PC-3 (cell line): ENCODE measurements at regions of chr21 and their contacts with region 1.

Region 1: GRCh38 chr21:39518138-39518846 is 66.5 kb downstream of the SH3BGR start:
- DNase-seq: peak; percentile 82
- ATAC-seq: peak; percentile 97
- H3K4me3 ChIP-seq: no peak overlapping the region
- H3K27ac ChIP-seq: no peak overlapping the region
- H3K4me1 ChIP-seq: peaks cover 5% of the 10 kb centered on the region; the same call in 1 of the 2 replicates
- H3K27me3 ChIP-seq: no peaks in the 10 kb centered on the region
- CTCF ChIP-seq: peak; percentile 96

Region 2: DNA sequence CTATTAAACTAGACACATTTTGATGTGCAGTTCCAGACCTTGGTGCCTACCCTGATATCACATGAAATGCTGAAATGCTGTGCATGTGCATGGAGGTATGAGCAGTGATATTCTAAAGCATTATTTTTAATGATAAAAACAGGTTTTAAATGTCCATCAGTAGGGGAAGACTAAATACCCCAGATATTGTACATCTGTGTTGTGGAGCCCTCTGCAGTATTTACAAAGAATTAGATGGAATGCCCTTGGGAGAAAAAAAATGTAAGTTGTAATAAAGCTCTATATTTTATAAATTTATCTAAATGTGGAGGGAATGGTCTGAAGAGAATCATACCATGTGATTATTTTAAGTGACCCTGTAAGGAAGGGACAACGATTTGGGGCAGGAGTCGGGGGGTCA is 187.6 kb after region 1 on chr21:
- CTCF ChIA-PET with region 1: no interaction called
- POLR2A ChIA-PET with region 1: no interaction called
- intact Hi-C with region 1: loop called (anchors 2 kb)
- DNase-seq: peak; percentile 44
- ATAC-seq: peak; percentile 45
- H3K4me3 ChIP-seq: no peak overlapping the region
- H3K27ac ChIP-seq: no peak overlapping the region
- H3K4me1 ChIP-seq: no peaks in the 10 kb centered on the region
- H3K27me3 ChIP-seq: no peaks in the 10 kb centered on the region
- CTCF ChIP-seq: peak; percentile 60

Region 3: DNA sequence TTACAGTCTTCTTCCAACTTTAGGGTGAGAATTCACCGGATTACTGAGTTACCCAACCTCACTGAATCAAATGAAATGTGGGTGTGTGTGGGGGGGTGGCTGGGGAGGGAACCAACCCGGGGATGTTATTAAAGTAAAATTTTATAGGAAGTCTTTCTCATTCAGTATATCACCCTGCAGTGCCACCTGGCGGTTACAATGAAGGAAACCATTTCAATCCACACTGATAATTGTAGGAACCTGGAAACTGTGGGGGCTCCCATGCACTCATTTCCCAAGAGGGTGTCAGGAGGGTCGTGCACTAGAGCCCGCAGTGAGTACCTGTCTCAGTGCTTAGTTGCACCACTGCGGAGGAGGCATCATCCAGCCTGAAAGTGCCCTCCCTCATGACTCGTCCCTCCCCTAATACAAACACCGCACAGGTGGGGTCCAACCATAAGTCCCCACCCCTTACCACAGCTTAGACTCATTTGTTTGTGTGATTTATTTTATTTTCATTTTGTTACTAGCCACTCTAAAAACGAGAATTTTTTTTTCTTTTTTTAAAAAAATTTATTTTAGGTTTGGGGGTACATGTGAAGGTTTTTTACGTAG is 197.6 kb after region 1 on chr21:
- CTCF ChIA-PET with region 1: interaction called, 4 read pairs
- POLR2A ChIA-PET with region 1: no interaction called
- intact Hi-C with region 1: loop called (anchors 1 kb)
- DNase-seq: peak; percentile 70
- ATAC-seq: peak; percentile 63
- H3K4me3 ChIP-seq: no peak overlapping the region
- H3K27ac ChIP-seq: no peak overlapping the region
- H3K4me1 ChIP-seq: no peaks in the 10 kb centered on the region
- H3K27me3 ChIP-seq: no peaks in the 10 kb centered on the region
- CTCF ChIP-seq: peak; percentile 82

Region 4: GRCh38 chr21:39726132-39726727 is 207.9 kb after region 1 on chr21:
- CTCF ChIA-PET with region 1: no interaction called
- POLR2A ChIA-PET with region 1: no interaction called
- intact Hi-C with region 1: no loop called
- DNase-seq: peak; percentile 19
- ATAC-seq: peak; percentile 53; the same call in 1 of the 2 replicates
- H3K4me3 ChIP-seq: no peak overlapping the region
- H3K27ac ChIP-seq: no peak overlapping the region
- H3K4me1 ChIP-seq: no peaks in the 10 kb centered on the region
- H3K27me3 ChIP-seq: no peaks in the 10 kb centered on the region
- CTCF ChIP-seq: peak; percentile 64